CD14-positive monocyte (primary cell): ENCODE measurements at regions of chr15 and their contacts with region 1.

Region 1: DNA sequence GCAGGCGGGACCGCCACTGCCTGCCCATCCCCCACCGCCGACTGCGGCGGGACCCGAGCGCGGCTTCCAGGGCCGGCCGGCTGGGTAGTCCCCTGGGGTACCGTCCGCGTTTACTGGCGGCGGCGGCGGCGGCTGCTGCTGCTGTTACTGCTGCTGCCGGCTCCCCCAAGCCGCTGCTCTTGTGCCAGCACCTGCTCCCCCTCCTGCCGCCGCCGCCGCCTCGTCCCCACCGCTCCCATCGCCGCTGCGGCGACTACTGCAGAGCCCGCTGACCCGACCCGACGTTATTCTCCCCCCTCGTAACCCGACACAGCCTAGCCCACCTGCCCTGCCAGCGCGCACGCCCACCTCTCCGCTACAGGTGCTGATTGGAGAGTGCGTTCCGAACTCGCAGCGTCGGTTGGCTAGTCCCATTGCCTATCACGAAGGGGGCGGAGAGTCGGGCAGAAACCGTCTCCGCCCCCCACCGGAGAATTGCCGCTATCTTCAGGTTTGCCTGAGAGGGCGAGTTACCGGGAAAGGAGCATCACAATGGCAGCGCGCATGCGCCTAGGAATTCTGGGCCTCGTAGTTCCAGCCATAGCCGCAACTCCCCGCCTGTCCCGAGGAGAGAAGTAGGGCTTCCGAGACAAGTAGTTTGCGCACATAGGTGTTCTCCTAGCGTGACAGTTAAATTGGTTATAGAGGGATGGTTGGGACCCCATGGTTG is at the start of gene TTBK2:
- DNase-seq: peak; percentile 96 to 98 (median 97)
- H3K4me3 ChIP-seq: peak within 1 kb of the TSS; percentile 69 to 88 (median 81)
- H3K4me3 Mint-ChIP-seq: peak within 1 kb of the TSS; percentile 96 to 98
- H3K27ac ChIP-seq: peak within 1 kb of the TSS; percentile 74 to 85
- H3K27ac Mint-ChIP-seq: peak within 1 kb of the TSS; percentile 81 to 96 (median 92)
- H3K4me1 ChIP-seq: peaks cover 27 to 48% of the 10 kb centered on the region in 2 donors
- H3K4me1 Mint-ChIP-seq: peaks cover 40% of the 10 kb centered on the region
- H3K27me3 ChIP-seq: no peaks in the 10 kb centered on the region
- H3K27me3 Mint-ChIP-seq: peaks cover 2 to 7% (median 3%) of the 10 kb centered on the region in 3 donors
- CTCF ChIP-seq: no peak
- polyA plus RNA-seq, gene TTBK2: 3.7 to 9.0 (median 5.7) TPM

Region 2: DNA sequence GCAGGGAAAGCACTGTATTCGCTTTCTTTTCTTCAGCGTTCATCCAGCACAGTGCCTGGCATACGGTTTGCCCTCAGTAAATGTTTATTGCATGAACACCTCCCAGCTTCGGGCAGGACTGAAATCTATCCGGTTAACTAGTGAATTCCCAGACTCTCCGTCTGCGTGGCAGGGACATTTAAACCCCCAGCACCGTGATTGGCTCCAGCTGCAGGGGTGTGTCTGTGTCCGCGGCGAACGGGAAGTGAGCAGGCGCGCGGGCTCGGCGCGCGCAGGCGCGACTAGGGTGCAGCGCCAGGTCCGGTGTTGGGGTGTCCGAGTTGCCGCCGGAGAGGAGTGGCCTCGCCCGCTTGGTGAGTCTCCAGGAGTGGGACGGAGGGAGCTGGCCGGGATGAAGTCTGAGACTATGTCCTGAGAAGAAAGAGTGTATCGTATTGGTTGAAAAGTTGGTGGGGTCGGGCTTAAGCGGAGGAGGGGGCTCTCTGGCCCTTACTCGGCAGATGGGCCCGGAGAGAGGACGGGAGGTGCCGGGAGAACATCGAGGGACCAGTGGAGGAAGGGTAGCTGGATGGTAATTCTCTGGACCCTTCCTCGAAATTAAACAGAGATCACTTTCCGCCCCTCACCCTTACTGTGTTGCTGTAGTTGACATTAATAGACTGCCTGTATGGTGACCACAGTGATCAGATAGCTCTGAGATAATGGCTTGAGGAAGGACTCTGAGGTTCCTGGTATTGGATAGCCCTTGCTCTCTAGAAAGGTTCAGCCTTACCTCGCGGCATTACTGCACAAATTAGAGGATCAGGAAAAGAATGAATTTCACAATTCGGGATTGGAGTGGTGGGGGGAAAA is 425.1 kb before region 1 on chr15 and contains the start of gene SNAP23:
- intact Hi-C with region 1: loop called (anchors 5 to 10 kb)
- DNase-seq: peak; percentile 82 to 88 (median 87)
- H3K4me3 ChIP-seq: peak within 1 kb of the TSS; percentile 93 to 98 (median 96)
- H3K4me3 Mint-ChIP-seq: peak within 1 kb of the TSS; percentile 100
- H3K27ac ChIP-seq: peak within 1 kb of the TSS; percentile 59 to 82
- H3K27ac Mint-ChIP-seq: peak within 1 kb of the TSS; percentile 88 to 99 (median 95)
- H3K4me1 ChIP-seq: peaks cover 71 to 79% of the 10 kb centered on the region in 2 donors
- H3K4me1 Mint-ChIP-seq: peaks cover 72% of the 10 kb centered on the region
- H3K27me3 ChIP-seq: no peaks in the 10 kb centered on the region
- H3K27me3 Mint-ChIP-seq: peaks cover 0 to 4% (median 0%) of the 10 kb centered on the region in 3 donors
- CTCF ChIP-seq: no peak
- polyA plus RNA-seq, gene SNAP23: 104 to 198 (median 187) TPM

Region 3: DNA sequence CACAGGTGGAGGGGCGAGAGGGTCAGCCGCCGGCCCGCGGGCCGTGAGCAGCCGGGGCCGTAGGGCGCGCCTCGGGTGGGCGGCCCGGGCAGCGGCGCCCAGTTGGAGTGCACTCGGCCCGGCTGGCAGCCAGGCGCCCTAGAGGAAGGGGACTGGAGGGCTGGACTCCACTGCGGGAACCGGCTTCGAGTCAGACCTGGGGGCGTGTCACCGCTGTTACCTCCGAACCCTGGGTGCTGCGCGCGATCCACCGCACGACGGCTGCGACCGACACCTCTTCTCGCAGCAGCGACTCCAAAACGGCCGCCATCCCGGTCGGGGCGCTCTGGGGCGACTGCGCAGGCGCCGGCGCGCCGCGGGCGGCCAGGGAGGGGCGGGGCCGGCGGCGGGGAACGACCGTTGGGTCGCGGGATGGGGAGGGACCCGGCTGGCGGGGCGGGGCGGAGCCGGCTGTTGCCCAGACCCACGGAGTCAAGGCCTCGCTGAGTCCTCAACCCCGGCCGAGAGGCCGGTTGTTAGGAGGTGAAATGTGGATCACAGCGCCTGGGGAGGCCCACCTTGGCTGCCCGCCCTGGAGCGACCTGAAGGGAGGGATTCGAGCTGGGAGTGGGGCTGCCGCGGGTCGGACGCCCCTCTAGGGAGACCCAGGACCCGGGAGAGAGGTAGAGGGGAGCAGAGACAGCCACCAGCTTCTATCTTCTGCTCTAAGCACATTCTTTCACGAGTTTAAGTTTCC is 183.7 kb before region 1 on chr15 and contains the start of gene CDAN1:
- intact Hi-C with region 1: loop called (anchors 5 to 10 kb)
- DNase-seq: peak; percentile 76 to 82 (median 79)
- H3K4me3 ChIP-seq: peak within 1 kb of the TSS; percentile 53 to 93 (median 74)
- H3K4me3 Mint-ChIP-seq: peak within 1 kb of the TSS; percentile 83 to 88
- H3K27ac ChIP-seq: peak within 1 kb of the TSS; percentile 13 to 64
- H3K27ac Mint-ChIP-seq: peak within 1 kb of the TSS in 6 of 7 donors; percentile 28 to 68 (median 55)
- H3K4me1 ChIP-seq: peaks cover 11 to 19% of the 10 kb centered on the region in 2 donors
- H3K4me1 Mint-ChIP-seq: peaks cover 14% of the 10 kb centered on the region
- H3K27me3 ChIP-seq: no peaks in the 10 kb centered on the region
- H3K27me3 Mint-ChIP-seq: peaks cover 0 to 2% (median 0%) of the 10 kb centered on the region in 3 donors
- CTCF ChIP-seq: no peak
- polyA plus RNA-seq, gene CDAN1: 1.1 to 6.3 (median 2.2) TPM